Common myeloid progenitor, CD34-positive (primary cell): ENCODE measurements at regions of chr1 and their contacts with region 1.

Region 1: DNA sequence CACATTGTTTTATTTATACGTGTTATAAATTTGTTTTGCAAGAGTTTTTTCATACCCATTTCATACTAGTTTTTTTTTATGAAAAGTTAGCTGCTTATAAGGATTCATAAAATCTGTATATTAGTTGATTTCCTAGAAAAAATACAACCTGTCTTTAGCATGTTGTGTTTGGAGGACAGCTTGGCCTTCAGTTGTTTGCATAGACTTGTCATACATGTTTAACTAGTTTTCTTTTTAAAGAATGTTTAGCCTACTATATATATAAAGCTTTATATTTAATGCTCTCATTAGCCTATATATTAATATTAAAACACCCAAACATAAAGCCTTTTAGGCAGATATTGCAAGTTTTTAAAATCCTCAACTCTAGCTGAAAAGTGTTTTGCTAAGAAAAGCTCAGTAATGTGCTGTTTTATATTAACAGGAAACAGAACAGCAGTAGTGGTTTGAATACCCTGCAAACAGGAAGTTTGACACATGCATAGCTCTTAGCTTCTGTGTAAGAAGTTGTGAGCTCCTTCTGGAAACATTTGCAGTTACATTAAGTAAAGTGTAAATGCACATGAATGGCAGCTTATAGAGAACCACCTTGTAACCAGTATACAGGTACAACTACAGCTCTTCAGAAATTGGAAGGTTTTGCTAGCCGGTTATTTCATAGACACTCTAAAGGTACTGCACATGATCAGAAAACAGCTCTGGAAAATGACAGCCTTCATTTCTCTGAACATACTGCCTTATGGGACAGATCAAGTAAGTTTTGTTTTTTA is at the start of gene PRKACB:
- DNase-seq: peak; percentile 78 to 93 (median 86)
- H3K4me3 ChIP-seq: peak within 1 kb of the TSS in 6 of 7 experiments; percentile 64 to 99 (median 80)
- H3K27ac ChIP-seq: peak within 1 kb of the TSS; percentile 97
- H3K4me1 ChIP-seq: peaks cover 12 to 51% (median 42%) of the 10 kb centered on the region in 4 experiments
- H3K27me3 ChIP-seq: no peaks in the 10 kb centered on the region

Region 2: DNA sequence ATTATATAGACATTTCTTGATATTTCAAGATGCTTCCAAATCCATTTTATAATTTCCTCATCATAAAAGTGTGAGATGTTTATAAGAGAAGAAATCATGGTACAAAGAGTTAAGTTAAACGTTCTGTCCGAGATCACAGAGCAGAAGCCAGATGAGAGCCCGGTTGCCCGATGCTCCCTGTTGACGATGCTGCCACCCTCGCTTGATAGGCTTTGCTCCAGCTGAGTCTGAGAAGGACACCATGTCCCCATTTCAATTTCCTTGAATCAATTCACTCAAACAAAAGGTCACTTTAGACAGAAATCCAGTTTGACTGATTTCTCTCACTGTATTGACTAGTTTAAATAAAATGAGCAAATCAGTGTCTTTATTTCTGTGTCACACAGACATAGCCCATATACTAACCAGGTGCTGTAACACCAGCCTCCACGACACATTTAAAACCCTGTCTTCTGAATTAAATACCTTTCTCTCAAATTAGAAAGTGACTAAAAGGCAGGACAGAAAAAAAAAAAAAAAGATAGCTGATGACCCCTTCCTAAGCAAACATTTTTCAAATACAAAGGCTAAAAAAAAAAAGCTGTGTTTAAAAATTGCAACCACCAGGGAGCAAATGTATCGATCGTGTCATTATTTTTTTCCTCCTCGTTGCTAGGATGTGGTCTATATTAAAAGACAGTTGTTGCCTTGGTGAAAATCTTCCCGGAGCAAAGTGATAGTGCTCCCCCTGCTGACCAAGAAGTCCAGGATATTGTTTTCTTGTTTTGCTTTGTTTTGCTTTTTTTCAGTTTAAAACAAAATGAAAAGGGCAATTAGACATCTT is 289.5 kb after region 1 on chr1:
- CTCF ChIA-PET with region 1: interaction called, 156 read pairs
- POLR2A ChIA-PET with region 1: interaction called, 3 read pairs
- DNase-seq: peak; percentile 92 to 96 (median 93)
- H3K4me3 ChIP-seq: peak overlapping the region in 6 of 7 experiments; percentile 20 to 80 (median 52)
- H3K27ac ChIP-seq: peak overlapping the region; percentile 94 to 96
- H3K4me1 ChIP-seq: peaks cover 23 to 49% (median 30%) of the 10 kb centered on the region in 4 experiments
- H3K27me3 ChIP-seq: no peaks in the 10 kb centered on the region

Region 3: GRCh38 chr1:84772428-84772943 is 628.5 kb after region 1 on chr1:
- CTCF ChIA-PET with region 1: interaction called, 13 read pairs
- POLR2A ChIA-PET with region 1: no interaction called
- DNase-seq: peak; percentile 79 to 87 (median 80)
- H3K4me3 ChIP-seq: no peak overlapping the region
- H3K27ac ChIP-seq: no peak overlapping the region
- H3K4me1 ChIP-seq: no peaks in the 10 kb centered on the region
- H3K27me3 ChIP-seq: no peaks in the 10 kb centered on the region